CD14-positive monocyte (primary cell): ENCODE measurements at regions of chr6 and their contacts with region 1.

Region 1: DNA sequence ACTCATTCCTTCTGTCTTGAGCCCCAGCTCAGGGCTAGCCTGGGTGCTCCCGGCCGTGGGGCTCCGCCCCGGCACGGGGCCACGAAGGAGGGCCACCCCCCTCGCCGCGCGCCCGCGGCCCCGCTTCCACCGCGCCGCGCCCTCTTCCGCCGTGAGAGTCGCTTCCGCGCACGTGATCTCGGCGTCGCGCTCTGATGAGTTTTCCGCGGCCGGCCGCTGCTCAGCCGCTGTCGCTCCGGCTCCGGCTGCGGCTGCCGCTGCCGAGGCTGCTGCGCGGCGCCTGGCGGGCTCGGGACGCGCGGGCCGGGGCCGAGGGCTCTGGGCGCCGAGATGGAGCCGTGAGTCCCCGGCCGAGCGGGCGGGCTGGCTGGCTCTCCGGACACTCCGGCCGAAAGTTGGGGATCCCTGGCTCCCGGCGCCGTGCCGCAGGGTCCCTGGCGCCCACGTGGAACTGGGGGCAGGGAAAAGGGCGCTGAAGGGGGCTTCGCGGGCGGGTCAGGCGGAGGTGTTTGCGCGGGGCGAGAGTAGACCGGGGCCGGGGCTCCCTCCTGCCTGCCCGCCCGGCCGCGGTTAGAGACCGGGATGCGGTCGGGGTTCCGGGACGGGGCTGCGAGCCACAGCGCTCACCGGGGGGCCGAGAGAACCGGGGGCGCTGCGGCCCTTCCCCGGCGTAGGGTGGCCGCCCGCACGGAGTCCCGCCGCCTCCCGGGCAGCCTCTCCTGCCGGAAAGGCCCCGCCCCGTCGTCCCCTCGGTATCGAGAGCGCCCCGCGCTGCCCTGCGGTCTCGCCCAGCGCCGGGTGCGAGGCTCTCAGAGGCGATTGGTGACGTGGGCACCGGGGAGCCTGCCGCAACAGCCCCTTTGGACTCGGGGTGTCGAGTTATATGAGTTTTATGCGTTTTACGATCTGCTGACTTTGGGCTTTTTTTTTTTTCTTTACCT is at the start of gene TMEM181:
- DNase-seq: peak; percentile 84 to 86 (median 85)
- H3K4me3 ChIP-seq: peak within 1 kb of the TSS; percentile 65 to 94 (median 88)
- H3K4me3 Mint-ChIP-seq: peak within 1 kb of the TSS; percentile 93 to 96
- H3K27ac ChIP-seq: peak within 1 kb of the TSS; percentile 57 to 91
- H3K27ac Mint-ChIP-seq: peak within 1 kb of the TSS; percentile 73 to 92 (median 88)
- H3K4me1 ChIP-seq: peaks cover 17 to 46% of the 10 kb centered on the region in 2 donors
- H3K4me1 Mint-ChIP-seq: peaks cover 43% of the 10 kb centered on the region
- H3K27me3 ChIP-seq: no peaks in the 10 kb centered on the region
- H3K27me3 Mint-ChIP-seq: peaks cover 2 to 3% (median 3%) of the 10 kb centered on the region in 3 donors
- CTCF ChIP-seq: no peak
- polyA plus RNA-seq, gene TMEM181: 2.4 to 6.8 (median 2.6) TPM

Region 2: GRCh38 chr6:158220786-158221442 is 339.3 kb before region 1 on chr6:
- intact Hi-C with region 1: loop called in 1 of 2 experiments (anchors 10 kb)
- DNase-seq: peak; percentile 83 to 87 (median 87)
- H3K4me3 ChIP-seq: no peak overlapping the region
- H3K4me3 Mint-ChIP-seq: no peak overlapping the region
- H3K27ac ChIP-seq: no peak overlapping the region
- H3K27ac Mint-ChIP-seq: peak overlapping the region in 6 of 7 donors; percentile 15 to 82 (median 65)
- H3K4me1 ChIP-seq: peaks cover 20 to 26% of the 10 kb centered on the region in 2 donors
- H3K4me1 Mint-ChIP-seq: peaks cover 15% of the 10 kb centered on the region
- H3K27me3 ChIP-seq: no peaks in the 10 kb centered on the region
- H3K27me3 Mint-ChIP-seq: peaks cover 6 to 12% (median 7%) of the 10 kb centered on the region in 3 donors
- CTCF ChIP-seq: peak; percentile 93

Region 3: GRCh38 chr6:158231551-158232315 is 328.4 kb before region 1 on chr6:
- intact Hi-C with region 1: loop called (anchors 5 to 10 kb)
- DNase-seq: peak; percentile 35 to 64 (median 63)
- H3K4me3 ChIP-seq: peak overlapping the region; percentile 68 to 81 (median 75)
- H3K4me3 Mint-ChIP-seq: peak overlapping the region; percentile 91 to 96
- H3K27ac ChIP-seq: peak overlapping the region; percentile 66 to 87
- H3K27ac Mint-ChIP-seq: peak overlapping the region; percentile 64 to 95 (median 92)
- H3K4me1 ChIP-seq: peaks cover 14 to 23% of the 10 kb centered on the region in 2 donors
- H3K4me1 Mint-ChIP-seq: peaks cover 26% of the 10 kb centered on the region
- H3K27me3 ChIP-seq: peaks cover 6 to 20% of the 10 kb centered on the region in 2 donors
- H3K27me3 Mint-ChIP-seq: peaks cover 20 to 23% (median 22%) of the 10 kb centered on the region in 3 donors
- CTCF ChIP-seq: no peak